ENCODE measurements at regions of chr3 and their contacts with region 1.

Region 1: GRCh38 chr3:9946112-9947024 is 5.8 kb downstream of the PRRT3 start:
- DNase-seq: peak; percentile 66
- H3K4me3 ChIP-seq: peak overlapping the region; percentile 64
- H3K27ac ChIP-seq: peak overlapping the region; percentile 21
- H3K27me3 ChIP-seq: no peaks in the 10 kb centered on the region
- CTCF ChIP-seq: peak; percentile 63

Region 2: DNA sequence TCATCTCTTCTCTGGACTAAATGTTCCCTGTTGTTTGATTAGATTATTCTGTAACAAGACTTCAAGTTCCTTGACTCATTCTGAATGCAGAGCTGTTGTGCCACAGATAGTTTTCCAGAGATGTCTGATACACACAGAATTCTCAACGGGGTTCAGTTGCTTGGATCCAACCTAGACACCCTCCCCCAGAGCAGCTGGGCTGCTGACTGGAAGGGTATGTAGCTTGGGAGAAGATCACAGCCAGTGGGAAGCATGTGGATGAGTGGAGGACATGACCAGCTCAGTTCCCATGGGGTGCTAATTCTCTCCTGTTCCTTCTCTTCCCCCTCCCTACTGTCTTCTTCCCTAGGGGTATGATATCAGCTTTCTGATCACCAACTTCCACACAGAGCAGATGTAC is 142.9 kb before region 1 on chr3:
- CTCF ChIA-PET with region 1: interaction called, 15 read pairs
- POLR2A ChIA-PET with region 1: no interaction called
- DNase-seq: no peak
- H3K4me3 ChIP-seq: no peak overlapping the region
- H3K27ac ChIP-seq: peak overlapping the region; percentile 63
- H3K27me3 ChIP-seq: no peaks in the 10 kb centered on the region
- CTCF ChIP-seq: no peak

Region 3: DNA sequence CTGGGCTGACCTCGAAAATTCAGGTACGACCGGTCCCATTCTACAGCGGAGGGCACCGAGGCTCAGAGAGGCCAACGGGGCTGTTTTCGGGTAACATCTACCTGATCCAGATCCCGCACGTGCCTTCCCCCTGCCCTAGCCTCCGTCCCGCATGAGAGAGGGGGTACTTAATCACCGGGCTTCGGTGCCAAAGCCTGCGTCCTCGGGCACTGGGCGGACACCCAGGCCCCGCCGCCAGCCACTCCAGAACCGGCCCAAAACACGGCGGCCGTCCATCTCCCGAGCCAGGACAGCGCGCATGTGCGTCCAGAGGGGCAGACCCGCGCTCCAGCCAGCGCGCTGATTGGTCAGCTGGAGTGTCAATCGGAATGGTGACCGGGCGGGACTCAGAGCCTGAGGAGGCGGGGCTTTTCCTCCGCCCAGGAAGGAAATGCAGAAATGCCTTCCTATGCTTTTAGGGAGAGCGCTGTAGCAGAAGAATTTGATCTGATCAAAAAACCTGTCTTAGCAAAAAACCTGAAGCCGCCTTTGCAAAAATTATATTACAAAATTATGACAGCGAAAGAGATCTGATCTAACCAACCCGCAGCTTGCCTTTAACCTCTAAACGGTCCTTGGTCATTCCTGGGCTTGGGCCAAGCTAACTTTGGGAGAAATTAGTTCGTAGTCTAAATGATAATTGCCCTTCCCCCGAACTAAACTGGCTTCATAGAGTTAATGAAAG is 102.5 kb before region 1 on chr3 and contains the start of gene RPUSD3:
- CTCF ChIA-PET with region 1: interaction called, 14 read pairs
- POLR2A ChIA-PET with region 1: no interaction called
- DNase-seq: peak; percentile 90
- H3K4me3 ChIP-seq: peak within 1 kb of the TSS; percentile 94
- H3K27ac ChIP-seq: peak within 1 kb of the TSS; percentile 61
- H3K27me3 ChIP-seq: no peaks in the 10 kb centered on the region
- CTCF ChIP-seq: no peak
- polyA plus RNA-seq, gene RPUSD3: 29.0 and 34.2 TPM in 2 replicates

Region 4: DNA sequence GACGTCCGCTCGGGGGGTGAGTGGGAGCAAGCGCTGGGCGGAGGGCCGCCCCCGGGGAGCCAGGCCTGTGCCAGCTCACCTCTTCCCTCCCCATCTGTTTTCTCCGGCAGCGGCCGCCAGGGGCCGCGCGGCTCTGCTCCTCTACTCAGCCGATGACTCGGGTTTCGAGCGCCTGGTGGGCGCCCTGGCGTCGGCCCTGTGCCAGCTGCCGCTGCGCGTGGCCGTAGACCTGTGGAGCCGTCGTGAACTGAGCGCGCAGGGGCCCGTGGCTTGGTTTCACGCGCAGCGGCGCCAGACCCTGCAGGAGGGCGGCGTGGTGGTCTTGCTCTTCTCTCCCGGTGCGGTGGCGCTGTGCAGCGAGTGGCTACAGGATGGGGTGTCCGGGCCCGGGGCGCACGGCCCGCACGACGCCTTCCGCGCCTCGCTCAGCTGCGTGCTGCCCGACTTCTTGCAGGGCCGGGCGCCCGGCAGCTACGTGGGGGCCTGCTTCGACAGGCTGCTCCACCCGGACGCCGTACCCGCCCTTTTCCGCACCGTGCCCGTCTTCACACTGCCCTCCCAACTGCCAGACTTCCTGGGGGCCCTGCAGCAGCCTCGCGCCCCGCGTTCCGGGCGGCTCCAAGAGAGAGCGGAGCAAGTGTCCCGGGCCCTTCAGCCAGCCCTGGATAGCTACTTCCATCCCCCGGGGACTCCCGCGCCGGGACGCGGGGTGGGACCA is 13.4 kb before region 1 on chr3:
- CTCF ChIA-PET with region 1: interaction called, 43 read pairs
- POLR2A ChIA-PET with region 1: interaction called, 22 read pairs
- DNase-seq: no peak
- H3K4me3 ChIP-seq: peak overlapping the region; percentile 77
- H3K27ac ChIP-seq: peak overlapping the region; percentile 93
- H3K27me3 ChIP-seq: no peaks in the 10 kb centered on the region
- CTCF ChIP-seq: peak; percentile 75

Region 5: GRCh38 chr3:9976721-9977709 is 30.6 kb after region 1 on chr3:
- CTCF ChIA-PET with region 1: interaction called, 11 read pairs
- POLR2A ChIA-PET with region 1: interaction called, 9 read pairs
- DNase-seq: peak; percentile 87
- H3K4me3 ChIP-seq: no peak overlapping the region
- H3K27ac ChIP-seq: peak overlapping the region; percentile 54
- H3K27me3 ChIP-seq: no peaks in the 10 kb centered on the region
- CTCF ChIP-seq: no peak

Region 6: DNA sequence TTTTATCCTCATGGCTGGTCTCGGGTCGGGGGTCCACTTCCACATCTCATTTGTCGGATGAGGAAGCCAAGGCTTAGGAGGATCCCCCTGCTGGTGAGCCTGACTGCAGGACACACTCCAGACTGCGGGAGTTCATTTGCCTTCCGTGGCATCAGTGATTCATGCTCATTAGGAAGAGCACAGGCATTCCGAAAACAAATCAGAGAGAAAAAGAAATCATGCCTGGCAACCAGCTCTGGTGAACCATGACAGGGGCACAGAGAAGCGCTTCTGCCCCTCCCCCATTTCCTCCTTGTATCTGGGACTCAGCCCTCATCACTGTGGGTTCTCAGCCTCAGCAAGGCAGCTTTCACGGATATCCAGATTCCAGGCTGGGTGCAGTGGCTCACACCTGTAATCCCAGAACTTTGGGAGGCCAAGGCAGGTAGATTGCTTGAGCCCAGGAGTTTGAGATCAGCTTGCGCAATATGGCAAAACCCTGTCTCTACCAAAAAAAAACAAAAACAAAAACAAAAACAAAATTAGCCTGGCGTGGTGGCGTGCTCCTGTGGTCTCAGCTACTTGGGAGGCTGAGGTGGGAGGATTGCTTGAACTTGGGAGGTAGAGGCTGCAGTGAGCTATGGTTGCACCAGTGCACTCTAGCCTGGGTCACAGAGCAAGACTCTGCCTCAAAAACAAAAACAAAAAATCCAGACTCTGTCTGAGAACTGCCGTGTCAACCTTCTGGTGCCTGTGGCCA is 246.8 kb after region 1 on chr3:
- CTCF ChIA-PET with region 1: interaction called, 10 read pairs
- POLR2A ChIA-PET with region 1: no interaction called
- DNase-seq: peak; percentile 68
- H3K4me3 ChIP-seq: no peak overlapping the region
- H3K27ac ChIP-seq: peak overlapping the region; percentile 98
- H3K27me3 ChIP-seq: no peaks in the 10 kb centered on the region
- CTCF ChIP-seq: peak; percentile 82

Region 7: GRCh38 chr3:10263646-10264363 is 317.4 kb after region 1 on chr3:
- CTCF ChIA-PET with region 1: no interaction called
- POLR2A ChIA-PET with region 1: no interaction called
- DNase-seq: no peak
- H3K4me3 ChIP-seq: no peak overlapping the region; the same call in 1 of the 2 replicates
- H3K27ac ChIP-seq: no peak overlapping the region
- H3K27me3 ChIP-seq: no peaks in the 10 kb centered on the region
- CTCF ChIP-seq: peak; percentile 60

Region 8: GRCh38 chr3:10395671-10396070 is 449.3 kb after region 1 on chr3:
- CTCF ChIA-PET with region 1: no interaction called
- POLR2A ChIA-PET with region 1: no interaction called
- DNase-seq: no peak
- H3K4me3 ChIP-seq: no peak overlapping the region
- H3K27ac ChIP-seq: no peak overlapping the region
- H3K27me3 ChIP-seq: peaks cover 37% of the 10 kb centered on the region
- CTCF ChIP-seq: no peak

Measured in AG04450 (cell line).